ENCODE measurements at regions of chr3 and their contacts with region 1.

Region 1: GRCh38 chr3:114418724-114419543 is 125.1 kb downstream of the TIGIT start:
- DNase-seq: no peak
- H3K4me3 Mint-ChIP-seq: no peak overlapping the region
- H3K27ac Mint-ChIP-seq: peak overlapping the region; percentile 84
- H3K4me1 Mint-ChIP-seq: peaks cover 29% of the 10 kb centered on the region
- H3K27me3 Mint-ChIP-seq: no peaks in the 10 kb centered on the region

Region 2: DNA sequence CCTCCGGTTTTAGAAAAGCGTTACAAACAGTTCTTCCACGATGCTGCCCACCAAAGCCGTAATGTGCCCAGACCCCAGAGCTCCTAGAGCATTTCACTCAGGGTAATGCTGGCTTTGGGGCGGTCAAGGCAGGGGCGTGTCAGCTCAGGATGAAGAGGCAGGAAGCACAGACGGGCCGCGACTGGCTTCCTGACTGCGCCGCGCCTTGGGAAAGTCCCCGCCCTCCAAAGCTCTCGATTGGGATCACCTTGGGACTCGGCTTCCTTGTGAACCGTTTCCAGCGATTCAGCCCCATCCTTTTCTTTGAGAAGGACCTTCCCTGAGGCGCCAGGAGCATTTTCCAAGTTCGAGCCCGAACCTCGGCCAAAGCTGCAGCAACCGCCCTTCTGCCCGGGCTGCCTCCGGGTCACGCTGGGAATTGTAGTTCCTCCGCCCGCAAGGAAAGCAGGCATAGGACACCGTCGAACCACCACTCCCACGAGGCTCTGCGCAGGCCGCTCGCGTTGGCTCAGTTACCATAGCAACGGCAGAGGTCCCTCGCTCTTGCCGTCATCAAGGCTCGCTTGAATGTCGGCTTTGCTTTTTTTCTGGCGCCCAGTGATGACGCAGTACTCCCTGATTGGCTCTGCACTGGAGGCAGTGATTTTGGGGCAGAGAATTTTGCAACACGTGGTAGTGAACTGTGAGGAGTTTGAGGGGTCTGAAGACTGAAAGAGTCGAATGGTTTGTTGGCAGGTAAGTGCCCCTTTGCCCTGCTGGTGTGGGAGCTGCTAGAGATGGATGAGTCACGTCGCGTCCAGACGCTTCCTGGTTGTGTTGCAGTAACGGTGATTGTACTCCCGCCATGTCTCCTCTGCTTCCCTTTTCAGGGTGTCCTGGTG is 362.6 kb before region 1 on chr3 and contains the starts of genes CCDC191 and QTRT2:
- intact Hi-C with region 1: loop called (anchors 2 kb)
- DNase-seq: peak; percentile 98
- H3K4me3 Mint-ChIP-seq: peak within 1 kb of the TSS; percentile 91
- H3K27ac Mint-ChIP-seq: peak within 1 kb of the TSS; percentile 89
- H3K4me1 Mint-ChIP-seq: peaks cover 22% of the 10 kb centered on the region
- H3K27me3 Mint-ChIP-seq: no peaks in the 10 kb centered on the region
- total RNA-seq, gene CCDC191: 0.68 and 0.76 TPM in 2 replicates
- total RNA-seq, gene QTRT2: 40.2 and 41.3 TPM in 2 replicates

Region 3: GRCh38 chr3:114079761-114080160 is 339.2 kb before region 1 on chr3:
- intact Hi-C with region 1: no loop called
- DNase-seq: no peak
- H3K4me3 Mint-ChIP-seq: no peak overlapping the region
- H3K27ac Mint-ChIP-seq: no peak overlapping the region
- H3K4me1 Mint-ChIP-seq: no peaks in the 10 kb centered on the region
- H3K27me3 Mint-ChIP-seq: no peaks in the 10 kb centered on the region

Region 4: DNA sequence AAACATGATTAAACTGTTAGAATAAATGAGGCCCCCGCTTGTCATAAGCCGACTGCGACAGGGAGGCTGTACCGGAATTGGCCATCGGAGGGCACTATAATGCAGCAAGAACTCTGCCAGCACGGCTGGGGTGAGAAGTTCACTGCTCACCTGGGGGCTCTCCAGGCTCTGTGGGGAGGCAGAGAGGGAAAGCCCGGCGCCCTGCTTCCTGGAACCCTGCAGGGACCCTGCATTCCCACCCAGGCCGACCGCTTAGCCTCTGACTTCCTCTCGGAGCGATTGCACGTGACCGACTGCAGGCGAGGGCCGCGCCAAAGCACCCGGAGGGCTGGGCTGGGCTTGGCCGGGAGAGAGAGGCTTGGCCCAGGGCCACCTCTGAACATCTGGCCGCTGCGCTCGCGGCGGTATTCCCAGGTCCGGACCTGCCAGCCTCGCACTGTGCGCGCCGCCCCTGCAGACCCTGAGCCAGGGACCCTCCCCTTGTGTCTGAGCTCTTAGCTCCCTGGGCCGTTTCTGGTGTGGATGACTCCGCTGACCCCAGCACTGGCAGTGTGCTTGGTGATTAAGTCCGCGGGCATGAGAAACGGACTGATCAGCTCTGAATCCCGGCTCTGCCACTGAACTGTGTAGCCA is 266.3 kb before region 1 on chr3:
- intact Hi-C with region 1: loop called (anchors 1 kb)
- DNase-seq: peak; percentile 63
- H3K4me3 Mint-ChIP-seq: peak overlapping the region; percentile 11
- H3K27ac Mint-ChIP-seq: no peak overlapping the region
- H3K4me1 Mint-ChIP-seq: peaks cover 3% of the 10 kb centered on the region
- H3K27me3 Mint-ChIP-seq: peaks cover 2% of the 10 kb centered on the region

Region 5: DNA sequence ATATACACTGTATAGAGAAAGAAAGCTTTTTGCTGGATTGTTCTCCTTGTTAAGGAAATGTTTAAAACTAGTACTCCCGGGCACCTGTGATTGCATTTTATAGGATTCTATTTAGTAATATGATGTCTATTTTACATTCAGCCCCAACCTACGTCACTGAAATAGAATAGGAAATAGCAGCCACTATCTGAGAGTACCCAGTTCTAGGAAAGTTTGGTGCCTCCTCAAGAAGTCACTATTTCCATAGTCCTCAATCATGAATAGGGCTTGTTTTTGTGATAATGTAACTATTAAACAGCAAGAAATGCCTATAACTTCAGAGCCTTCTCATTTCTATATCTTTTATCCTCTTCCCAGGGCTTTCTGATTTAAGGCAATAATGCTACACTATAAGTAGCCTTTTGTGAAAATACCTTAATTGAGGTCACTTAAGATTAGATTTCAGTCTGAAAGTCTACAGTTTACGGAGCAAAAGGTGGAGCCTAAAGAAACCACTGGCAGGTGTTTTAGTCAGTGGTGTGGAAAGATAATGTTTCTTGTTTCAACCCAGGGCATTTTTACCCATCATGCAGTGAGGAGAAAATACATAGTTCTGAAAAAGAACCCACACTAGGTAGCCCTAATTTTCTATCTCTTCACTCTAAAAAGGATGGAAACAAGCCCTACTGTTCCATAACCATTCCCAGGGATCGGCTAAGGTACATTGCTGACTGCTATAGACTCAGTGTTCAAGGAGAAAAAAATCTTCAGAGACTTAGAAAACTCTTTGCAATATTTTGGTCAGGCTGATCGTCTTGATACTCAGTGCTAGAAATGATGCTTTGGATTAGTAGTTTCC is 86.4 kb before region 1 on chr3:
- intact Hi-C with region 1: loop called (anchors 1 kb)
- DNase-seq: no peak
- H3K4me3 Mint-ChIP-seq: no peak overlapping the region
- H3K27ac Mint-ChIP-seq: peak overlapping the region; percentile 80
- H3K4me1 Mint-ChIP-seq: peaks cover 64% of the 10 kb centered on the region
- H3K27me3 Mint-ChIP-seq: no peaks in the 10 kb centered on the region

Region 6: GRCh38 chr3:114383875-114384557 is 34.9 kb before region 1 on chr3:
- intact Hi-C with region 1: loop called (anchors 1 kb)
- DNase-seq: peak; percentile 45
- H3K4me3 Mint-ChIP-seq: peak overlapping the region; percentile 67
- H3K27ac Mint-ChIP-seq: peak overlapping the region; percentile 55
- H3K4me1 Mint-ChIP-seq: peaks cover 7% of the 10 kb centered on the region
- H3K27me3 Mint-ChIP-seq: no peaks in the 10 kb centered on the region

Measured in activated T-helper 2 cell treated with anti-CD3 and anti-CD28 coated beads, Interferon-gamma antibody, Interleukin-2, Interleukin-4, amounts not matched to agents 10 μg/mL and 5 μg/mL and 100 μg/mL, durations not matched to agents 14 hours and 24 hours and 36 hours (primary cell).